Esophagus squamous epithelium (tissue), 5 donors: ENCODE measurements at regions of chr10 and their contacts with region 1.

Region 1: DNA sequence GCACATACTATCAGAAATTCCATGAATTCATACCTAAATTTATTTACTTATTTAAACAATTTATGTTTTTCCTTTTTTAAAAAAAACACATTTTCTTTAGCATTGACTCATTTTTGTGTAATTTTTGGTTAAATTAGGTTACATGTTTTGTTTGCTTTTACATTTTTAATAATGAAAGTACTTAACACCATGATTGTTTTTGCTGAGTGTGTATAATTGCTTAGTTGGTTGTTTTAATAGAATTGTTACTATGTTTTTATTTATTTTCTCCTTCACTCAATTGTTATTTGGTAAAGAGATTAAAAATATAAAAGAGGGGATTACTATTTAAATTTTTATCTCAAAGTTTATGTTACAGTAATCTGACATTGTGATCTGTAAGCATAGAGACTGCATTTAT is 508.4 kb downstream of the NRG3 start:
- DNase-seq: no peak
- H3K4me3 ChIP-seq: no peak overlapping the region
- H3K27ac ChIP-seq: no peak overlapping the region
- H3K4me1 ChIP-seq: no peaks in the 10 kb centered on the region
- H3K27me3 ChIP-seq: no peaks in the 10 kb centered on the region
- CTCF ChIP-seq: no peak
- POLR2A ChIP-seq: no peak

Region 2: DNA sequence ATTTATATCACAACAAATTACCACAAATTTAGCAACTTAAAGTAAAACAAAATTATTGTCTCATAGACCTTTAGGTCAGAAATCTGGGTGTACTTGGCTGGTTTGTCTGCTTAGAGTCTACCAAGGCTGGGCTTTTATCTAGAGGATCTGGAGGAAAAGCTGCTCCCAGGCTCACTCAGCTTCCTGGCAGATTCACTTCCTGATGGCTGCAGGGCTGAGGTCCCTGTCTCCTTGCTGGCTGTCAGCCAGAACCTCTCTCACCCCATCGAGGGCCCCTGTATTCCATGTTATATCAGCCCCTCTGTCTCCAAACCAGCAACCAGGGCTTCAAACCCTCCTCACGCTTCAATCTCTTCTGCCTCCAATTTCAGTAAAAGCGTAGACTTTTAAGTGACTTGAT is 226.5 kb after region 1 on chr10:
- intact Hi-C with region 1: no loop called
- DNase-seq: no peak
- H3K4me3 ChIP-seq: no peak overlapping the region
- H3K27ac ChIP-seq: no peak overlapping the region
- H3K4me1 ChIP-seq: no peaks in the 10 kb centered on the region
- H3K27me3 ChIP-seq: no peaks in the 10 kb centered on the region
- CTCF ChIP-seq: no peak
- POLR2A ChIP-seq: no peak

Region 3: DNA sequence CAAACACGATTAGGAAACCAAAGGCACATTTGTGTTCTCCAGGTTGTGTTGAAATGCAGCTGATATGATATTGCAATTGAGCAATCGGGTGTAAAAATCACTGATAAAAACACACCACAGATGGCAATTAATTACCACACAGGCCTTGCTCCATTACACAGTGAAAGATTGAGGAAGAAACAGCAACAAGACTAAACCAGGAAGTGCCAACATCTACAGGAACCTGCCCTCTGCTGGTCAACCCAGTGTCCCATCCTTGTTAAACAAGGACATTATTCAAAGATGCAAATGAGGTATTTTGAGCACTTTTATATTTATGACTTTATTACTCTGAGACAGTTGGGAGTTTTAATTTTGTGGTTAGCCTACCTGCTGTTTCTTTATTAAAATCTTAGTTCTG is 990.3 kb after region 1 on chr10:
- intact Hi-C with region 1: loop called (anchors 10 kb)
- DNase-seq: no peak
- H3K4me3 ChIP-seq: no peak overlapping the region
- H3K27ac ChIP-seq: no peak overlapping the region
- H3K4me1 ChIP-seq: no peaks in the 10 kb centered on the region
- H3K27me3 ChIP-seq: no peaks in the 10 kb centered on the region
- CTCF ChIP-seq: peak; percentile 12 to 51 (median 31)
- POLR2A ChIP-seq: no peak